ENCODE measurements at regions of chrX and their contacts with region 1.

Region 1: DNA sequence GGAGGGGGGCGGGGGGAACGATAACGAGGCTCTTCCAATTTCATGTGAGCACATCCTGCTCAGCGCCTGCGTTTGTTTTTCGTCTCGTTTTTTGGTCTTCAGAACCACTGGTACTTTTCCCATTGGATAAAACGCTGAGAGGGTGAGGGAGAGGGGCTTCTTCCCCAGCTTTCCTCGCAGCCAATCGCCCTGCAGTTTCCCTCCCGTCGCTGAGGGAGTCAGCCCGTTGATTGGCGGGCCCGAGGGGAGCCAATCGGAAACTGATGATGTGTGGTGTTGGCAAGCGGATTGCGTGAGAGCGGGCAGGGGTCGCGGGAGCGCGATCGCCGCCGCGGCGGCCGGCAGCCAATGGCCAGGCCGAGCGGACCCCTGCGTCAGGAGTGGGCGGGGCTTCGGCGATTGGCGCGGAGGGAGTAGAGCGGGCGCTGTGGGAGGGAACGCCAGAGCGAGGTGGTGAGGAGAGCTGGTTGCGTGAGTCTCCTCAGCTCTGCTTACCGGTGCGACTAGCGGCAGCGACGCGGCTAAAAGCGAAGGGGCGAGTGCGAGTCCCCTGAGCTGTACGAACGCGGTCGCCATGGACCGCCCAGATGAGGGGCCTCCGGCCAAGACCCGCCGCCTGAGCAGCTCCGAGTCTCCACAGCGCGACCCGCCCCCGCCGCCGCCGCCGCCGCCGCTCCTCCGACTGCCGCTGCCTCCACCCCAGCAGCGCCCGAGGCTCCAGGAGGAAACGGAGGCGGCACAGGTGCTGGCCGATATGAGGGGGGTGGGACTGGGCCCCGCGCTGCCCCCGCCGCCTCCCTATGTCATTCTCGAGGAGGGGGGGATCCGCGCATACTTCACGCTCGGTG is at the start of gene TSPYL2:
- DNase-seq: peak; percentile 94 to 95
- ATAC-seq: peak; percentile 93
- H3K4me3 ChIP-seq: peak within 1 kb of the TSS; percentile 72 to 84 (median 75)
- H3K27ac ChIP-seq: peak within 1 kb of the TSS; percentile 83 to 91 (median 89)
- H3K4me1 ChIP-seq: peaks cover 0 to 8% of the 10 kb centered on the region in 2 donors
- H3K27me3 ChIP-seq: no peaks in the 10 kb centered on the region
- CTCF ChIP-seq: peak in 1 of 5 experiments; percentile 7
- POLR2A ChIP-seq: peak; percentile 94 to 98
- total RNA-seq, gene TSPYL2: 46.7 to 161 (median 78.6) TPM

Region 2: GRCh38 chrX:53093748-53094583 is 11.8 kb after region 1 on chrX and contains the start of gene KANTR:
- in situ Hi-C with region 1: no loop called
- intact Hi-C with region 1: no loop called
- DNase-seq: peak; percentile 82 to 91
- ATAC-seq: peak; percentile 94 to 96
- H3K4me3 ChIP-seq: peak within 1 kb of the TSS; percentile 63 to 76 (median 68)
- H3K27ac ChIP-seq: peak within 1 kb of the TSS; percentile 85 to 95 (median 92)
- H3K4me1 ChIP-seq: peaks cover 6 to 7% of the 10 kb centered on the region in 2 donors
- H3K27me3 ChIP-seq: no peaks in the 10 kb centered on the region
- CTCF ChIP-seq: no peak
- POLR2A ChIP-seq: peak; percentile 75 to 83
- total RNA-seq, gene KANTR: 3.0 to 13.0 (median 7.4) TPM

Region 3: GRCh38 chrX:53160297-53160984 is 78.3 kb after region 1 on chrX:
- in situ Hi-C with region 1: no loop called
- intact Hi-C with region 1: loop called (anchors 5 kb)
- DNase-seq: peak; percentile 25 to 37
- ATAC-seq: peak; percentile 37 to 52
- H3K4me3 ChIP-seq: no peak overlapping the region
- H3K27ac ChIP-seq: peak overlapping the region; percentile 73 to 84 (median 78)
- H3K4me1 ChIP-seq: peaks cover 10 to 43% of the 10 kb centered on the region in 2 donors
- H3K27me3 ChIP-seq: no peaks in the 10 kb centered on the region
- CTCF ChIP-seq: no peak
- POLR2A ChIP-seq: no peak

Region 4: GRCh38 chrX:54171527-54172250 is 1089.5 kb after region 1 on chrX:
- in situ Hi-C with region 1: no loop called
- intact Hi-C with region 1: no loop called
- DNase-seq: no peak
- ATAC-seq: peak in 1 of 2 donors; percentile 62
- H3K4me3 ChIP-seq: no peak overlapping the region
- H3K27ac ChIP-seq: no peak overlapping the region
- H3K4me1 ChIP-seq: peaks cover 0 to 7% of the 10 kb centered on the region in 2 donors
- H3K27me3 ChIP-seq: no peaks in the 10 kb centered on the region
- CTCF ChIP-seq: no peak
- POLR2A ChIP-seq: no peak